MCF 10A (cell line): ENCODE measurements at regions of chr1 and their contacts with region 1.

Region 1: DNA sequence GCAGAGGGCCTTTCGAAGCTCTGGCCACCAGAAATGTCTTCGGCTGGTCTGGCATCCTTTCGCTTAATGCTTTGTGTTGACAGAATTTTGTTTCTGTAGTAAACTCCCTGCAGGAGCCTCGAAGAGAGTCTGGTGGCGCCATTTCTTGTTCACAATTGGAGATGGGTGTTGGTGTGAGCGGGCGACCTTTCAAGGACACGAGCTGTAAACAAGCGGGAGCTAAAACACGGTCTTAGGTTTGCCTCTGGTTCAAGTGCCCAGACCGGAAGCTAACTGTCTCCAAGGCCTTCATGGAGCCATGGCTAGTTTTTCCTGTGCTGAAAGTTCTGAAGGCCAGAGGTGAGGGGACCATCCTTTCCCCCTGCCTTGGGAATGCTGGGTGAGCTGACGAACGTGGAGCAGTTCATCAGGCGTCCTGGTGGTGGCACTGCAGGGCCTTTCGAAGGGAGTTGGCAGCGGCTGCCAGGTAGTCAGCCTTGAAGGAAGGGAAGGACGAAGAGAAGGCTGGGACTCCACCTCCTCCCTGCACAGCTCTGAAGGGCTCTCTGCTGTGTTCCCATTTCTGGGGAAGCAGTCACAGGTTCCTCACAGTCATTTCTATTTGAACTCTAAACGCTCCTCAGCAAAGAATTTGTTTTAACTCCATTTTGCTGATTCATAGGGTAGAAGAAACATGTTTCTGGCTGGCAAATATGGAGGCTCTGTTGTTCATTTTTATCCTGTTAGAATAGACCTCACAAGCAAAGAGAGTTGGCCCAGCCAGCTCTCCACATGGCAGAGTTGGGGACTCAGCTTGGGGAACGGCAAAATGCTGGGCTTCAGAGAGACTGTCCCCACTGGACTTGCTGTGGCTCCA is 35.2 kb downstream of the URB2 start:
- DNase-seq: peak; percentile 89
- H3K4me3 Mint-ChIP-seq: no peak overlapping the region
- H3K27ac Mint-ChIP-seq: peak overlapping the region; percentile 13
- H3K4me1 Mint-ChIP-seq: peaks cover 7% of the 10 kb centered on the region
- H3K27me3 Mint-ChIP-seq: no peaks in the 10 kb centered on the region
- CTCF ChIP-seq: peak; percentile 99

Region 2: GRCh38 chr1:229614701-229615100 is 46.5 kb before region 1 on chr1:
- CTCF ChIA-PET with region 1: no interaction called
- POLR2A ChIA-PET with region 1: no interaction called
- intact Hi-C with region 1: no loop called
- DNase-seq: no peak
- H3K4me3 Mint-ChIP-seq: no peak overlapping the region
- H3K27ac Mint-ChIP-seq: no peak overlapping the region
- H3K4me1 Mint-ChIP-seq: peaks cover 4% of the 10 kb centered on the region
- H3K27me3 Mint-ChIP-seq: no peaks in the 10 kb centered on the region
- CTCF ChIP-seq: no peak

Region 3: GRCh38 chr1:229636042-229636441 is 25.2 kb before region 1 on chr1:
- CTCF ChIA-PET with region 1: interaction called, 20 read pairs
- POLR2A ChIA-PET with region 1: no interaction called
- intact Hi-C with region 1: no loop called
- DNase-seq: no peak
- H3K4me3 Mint-ChIP-seq: no peak overlapping the region
- H3K27ac Mint-ChIP-seq: no peak overlapping the region
- H3K4me1 Mint-ChIP-seq: peaks cover 3% of the 10 kb centered on the region
- H3K27me3 Mint-ChIP-seq: no peaks in the 10 kb centered on the region
- CTCF ChIP-seq: no peak

Region 4: GRCh38 chr1:229650045-229650444 is 11.2 kb before region 1 on chr1:
- CTCF ChIA-PET with region 1: interaction called, 29 read pairs
- POLR2A ChIA-PET with region 1: interaction called, 4 read pairs
- intact Hi-C with region 1: no loop called
- DNase-seq: no peak
- H3K4me3 Mint-ChIP-seq: no peak overlapping the region
- H3K27ac Mint-ChIP-seq: no peak overlapping the region
- H3K4me1 Mint-ChIP-seq: no peaks in the 10 kb centered on the region
- H3K27me3 Mint-ChIP-seq: no peaks in the 10 kb centered on the region
- CTCF ChIP-seq: no peak

Region 5: DNA sequence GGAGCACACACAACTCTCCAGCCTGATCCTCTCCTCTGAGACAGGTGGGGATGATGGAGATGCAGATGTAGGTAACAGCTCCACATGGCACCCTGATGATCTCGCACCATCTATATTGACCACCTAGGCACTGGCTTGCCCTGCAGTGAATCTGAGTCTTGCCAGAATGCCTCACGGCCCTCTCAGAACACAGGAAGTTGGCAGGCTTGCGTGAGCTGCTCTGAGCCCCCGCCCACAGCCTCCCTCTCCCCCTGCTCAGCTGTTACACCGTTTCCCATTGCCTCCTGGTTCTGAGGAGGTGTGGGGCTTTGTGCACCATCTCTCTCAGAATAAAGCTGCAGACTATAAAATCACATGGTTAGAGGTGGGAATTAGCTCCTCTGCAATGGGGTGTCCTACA is 12.8 kb after region 1 on chr1:
- CTCF ChIA-PET with region 1: interaction called, 33 read pairs
- POLR2A ChIA-PET with region 1: interaction called, 21 read pairs
- intact Hi-C with region 1: no loop called
- DNase-seq: no peak
- H3K4me3 Mint-ChIP-seq: no peak overlapping the region
- H3K27ac Mint-ChIP-seq: no peak overlapping the region
- H3K4me1 Mint-ChIP-seq: no peaks in the 10 kb centered on the region
- H3K27me3 Mint-ChIP-seq: no peaks in the 10 kb centered on the region
- CTCF ChIP-seq: no peak

Region 6: GRCh38 chr1:229778683-229779260 is 117.5 kb after region 1 on chr1:
- CTCF ChIA-PET with region 1: no interaction called
- POLR2A ChIA-PET with region 1: no interaction called
- intact Hi-C with region 1: no loop called
- DNase-seq: no peak
- H3K4me3 Mint-ChIP-seq: no peak overlapping the region
- H3K27ac Mint-ChIP-seq: no peak overlapping the region
- H3K4me1 Mint-ChIP-seq: no peaks in the 10 kb centered on the region
- H3K27me3 Mint-ChIP-seq: peaks cover 21% of the 10 kb centered on the region
- CTCF ChIP-seq: no peak

Region 7: DNA sequence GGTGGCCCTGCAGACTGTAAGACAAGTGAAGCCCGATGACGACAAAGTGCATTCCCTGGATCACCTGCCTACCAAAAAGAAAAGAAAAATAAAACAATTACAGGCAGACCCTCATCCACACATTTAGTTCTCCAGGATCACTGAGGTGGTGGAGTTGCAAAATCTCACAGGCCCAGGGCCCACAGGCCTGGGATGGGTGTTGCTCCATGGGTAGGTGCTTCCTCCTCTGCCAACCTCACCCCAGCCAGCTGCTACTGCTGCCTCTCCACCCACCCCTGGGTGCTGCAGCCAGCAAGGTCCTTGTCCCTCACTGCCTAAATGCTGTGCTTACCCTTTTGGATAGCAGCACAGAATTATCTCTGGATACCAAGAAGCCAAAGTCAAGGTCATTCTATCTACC is 259.4 kb after region 1 on chr1:
- CTCF ChIA-PET with region 1: no interaction called
- POLR2A ChIA-PET with region 1: no interaction called
- intact Hi-C with region 1: no loop called
- DNase-seq: no peak
- H3K4me3 Mint-ChIP-seq: no peak overlapping the region
- H3K27ac Mint-ChIP-seq: no peak overlapping the region
- H3K4me1 Mint-ChIP-seq: no peaks in the 10 kb centered on the region
- H3K27me3 Mint-ChIP-seq: peaks cover 13% of the 10 kb centered on the region
- CTCF ChIP-seq: no peak

Region 8: GRCh38 chr1:230167419-230167852 is 506.2 kb after region 1 on chr1:
- CTCF ChIA-PET with region 1: interaction called, 4 read pairs
- POLR2A ChIA-PET with region 1: no interaction called
- intact Hi-C with region 1: loop called (anchors 5 kb)
- DNase-seq: peak; percentile 77
- H3K4me3 Mint-ChIP-seq: no peak overlapping the region
- H3K27ac Mint-ChIP-seq: no peak overlapping the region
- H3K4me1 Mint-ChIP-seq: peaks cover 29% of the 10 kb centered on the region
- H3K27me3 Mint-ChIP-seq: no peaks in the 10 kb centered on the region
- CTCF ChIP-seq: peak; percentile 89

Region 9: DNA sequence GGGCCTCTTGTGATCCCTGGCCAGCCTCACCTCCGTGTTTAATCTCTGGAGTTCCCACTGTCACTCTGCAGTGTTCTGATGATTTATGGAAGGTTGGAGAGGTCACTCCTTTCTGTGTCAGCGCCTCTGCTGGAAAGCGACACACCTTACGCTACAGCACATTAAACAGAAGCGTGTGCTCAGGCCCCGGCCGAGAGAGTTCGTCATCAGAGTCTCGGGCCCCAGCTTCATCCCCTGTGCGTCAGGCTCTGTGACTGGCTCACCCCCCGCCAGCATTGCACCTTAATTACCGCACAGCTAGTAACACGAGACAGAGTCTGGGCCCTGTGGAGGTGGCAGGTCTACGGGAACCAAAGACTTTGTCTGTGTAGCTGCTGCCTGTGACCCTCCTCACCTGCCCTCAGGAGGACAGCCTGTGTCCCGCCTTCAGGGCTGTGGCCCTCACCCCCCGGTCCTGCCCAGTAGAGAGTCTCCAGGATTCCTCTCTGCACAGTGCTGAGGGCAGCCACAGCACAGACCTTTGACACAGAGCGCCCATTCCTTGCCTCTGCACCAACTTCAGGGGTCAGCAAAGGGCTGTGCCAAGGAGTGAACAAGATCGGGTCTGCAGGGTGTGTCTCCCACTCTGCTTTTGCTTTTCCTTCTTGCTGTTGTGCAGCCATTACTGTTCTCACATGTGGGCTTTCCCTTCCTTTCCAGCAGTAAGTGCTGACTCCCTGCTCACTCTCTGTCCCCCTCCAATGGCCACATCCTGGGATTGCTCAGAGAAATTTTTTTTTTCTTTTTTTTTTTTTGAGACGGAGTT is 607.3 kb after region 1 on chr1:
- CTCF ChIA-PET with region 1: interaction called, 16 read pairs
- POLR2A ChIA-PET with region 1: no interaction called
- intact Hi-C with region 1: loop called (anchors 1 kb)
- DNase-seq: peak; percentile 81
- H3K4me3 Mint-ChIP-seq: no peak overlapping the region
- H3K27ac Mint-ChIP-seq: no peak overlapping the region
- H3K4me1 Mint-ChIP-seq: no peaks in the 10 kb centered on the region
- H3K27me3 Mint-ChIP-seq: no peaks in the 10 kb centered on the region
- CTCF ChIP-seq: peak; percentile 87